ENCODE measurements at regions of chr22 and their contacts with region 1.

Region 1: DNA sequence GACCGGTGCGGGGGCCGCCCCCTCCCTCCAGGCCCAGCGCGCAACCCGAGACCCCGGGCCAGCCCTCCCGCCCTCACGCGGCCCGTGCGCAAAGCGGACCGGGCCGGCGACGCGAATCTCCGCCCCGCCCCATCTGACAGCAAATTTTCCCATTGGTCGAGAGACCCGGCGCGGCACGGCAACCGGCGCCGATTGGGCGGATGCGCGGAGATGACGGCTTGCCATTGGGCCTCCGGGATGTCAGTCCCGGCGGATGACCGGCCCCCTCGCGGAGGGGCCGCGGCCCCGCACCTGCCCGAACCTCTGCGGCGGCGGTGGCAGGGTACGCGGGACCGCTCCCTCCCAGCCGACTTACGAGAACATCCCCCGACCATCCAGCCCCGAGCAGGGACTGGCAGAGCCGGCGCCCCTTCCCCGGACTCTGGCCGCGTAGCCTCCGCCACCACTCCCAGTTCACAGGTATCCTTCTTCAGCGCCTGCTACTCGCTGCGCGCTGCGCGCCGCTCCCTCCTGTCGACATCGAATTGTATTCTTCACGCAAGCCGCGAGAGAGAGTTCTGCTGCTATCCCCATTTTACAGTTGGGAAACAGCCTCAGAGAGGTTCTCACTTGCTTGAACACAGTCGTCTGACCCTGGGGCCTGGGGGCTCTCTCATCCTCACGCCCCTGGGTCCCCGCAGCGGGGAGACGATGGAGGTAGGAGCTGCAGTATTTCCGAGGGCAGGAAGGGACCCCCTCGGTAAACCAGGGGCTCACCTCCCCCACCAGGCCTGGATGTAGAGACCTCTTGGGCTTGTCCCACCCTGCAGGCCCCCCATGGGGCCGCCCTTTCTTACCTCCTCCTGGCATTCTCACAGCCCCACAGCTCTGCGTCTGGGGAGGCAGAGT is at the start of gene ARVCF:
- DNase-seq: peak; percentile 89 to 94 (median 90)
- H3K4me3 ChIP-seq: peak within 1 kb of the TSS; percentile 77 to 83
- H3K4me3 Mint-ChIP-seq: peak within 1 kb of the TSS; percentile 86 to 92 (median 90)
- H3K27ac ChIP-seq: peak within 1 kb of the TSS; percentile 17
- H3K27ac Mint-ChIP-seq: peak within 1 kb of the TSS in 6 of 7 donors; percentile 8 to 67 (median 59)
- H3K4me1 ChIP-seq: peaks cover 35% of the 10 kb centered on the region
- H3K4me1 Mint-ChIP-seq: peaks cover 7 to 36% (median 20%) of the 10 kb centered on the region in 4 donors
- H3K27me3 ChIP-seq: no peaks in the 10 kb centered on the region
- H3K27me3 Mint-ChIP-seq: peaks cover 0 to 2% of the 10 kb centered on the region in 2 donors
- total RNA-seq, gene ARVCF: 3.5 to 4.2 TPM

Region 2: DNA sequence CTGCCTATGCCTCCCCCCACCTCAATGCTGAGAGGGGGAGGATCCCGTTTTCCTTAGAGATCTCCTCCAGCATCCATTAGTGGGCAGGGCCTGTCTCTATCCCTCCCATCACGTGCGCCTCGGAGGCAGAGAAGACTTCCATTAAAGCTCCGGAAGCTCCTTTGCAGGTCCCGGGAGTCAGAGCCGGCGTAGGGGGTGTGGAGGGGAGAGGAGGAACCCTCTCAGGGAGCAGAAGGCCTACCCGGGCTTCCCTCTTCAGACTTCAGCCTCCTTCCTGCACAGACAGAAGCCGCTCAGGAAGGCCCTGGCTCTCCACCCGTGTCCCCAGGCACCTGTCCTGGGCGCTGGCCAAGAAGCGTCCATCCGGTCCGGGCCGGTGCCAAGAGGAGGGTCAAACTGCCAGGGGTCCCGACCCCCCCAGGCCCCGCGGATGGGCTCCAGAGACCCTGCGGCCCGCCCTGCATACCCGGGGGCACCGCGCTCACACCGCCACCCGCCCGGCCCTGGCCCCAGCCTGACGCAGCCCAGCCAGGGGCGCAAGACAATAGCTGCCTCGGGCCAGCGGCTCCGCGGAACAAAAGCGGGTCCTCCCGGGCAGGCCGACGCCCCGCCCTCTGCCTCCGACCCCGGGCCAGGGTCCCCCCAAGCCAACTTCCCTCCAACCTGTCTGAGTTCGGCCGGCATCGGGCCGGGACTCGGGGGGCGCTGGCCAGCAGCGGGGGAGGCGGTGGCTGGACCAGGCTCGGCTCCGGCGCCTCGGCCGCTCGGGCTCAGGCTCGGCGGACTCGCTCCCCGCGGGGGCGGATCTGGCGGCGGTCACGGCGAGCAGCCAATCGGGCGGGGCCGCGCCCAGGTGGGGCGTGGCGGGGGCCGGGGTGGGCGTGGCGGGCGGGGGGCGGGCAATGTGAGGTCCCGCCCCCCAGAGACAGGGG is 30.3 kb before region 1 on chr22:
- CTCF ChIA-PET with region 1: no interaction called
- POLR2A ChIA-PET with region 1: no interaction called
- intact Hi-C with region 1: loop called (anchors 2 kb)
- DNase-seq: peak in 4 of 5 donors; percentile 41 to 61 (median 50)
- H3K4me3 ChIP-seq: peak overlapping the region in 1 of 2 donors; percentile 44
- H3K4me3 Mint-ChIP-seq: peak overlapping the region in 7 of 8 donors; percentile 31 to 64 (median 42)
- H3K27ac ChIP-seq: no peak overlapping the region
- H3K27ac Mint-ChIP-seq: no peak overlapping the region
- H3K4me1 ChIP-seq: peaks cover 24% of the 10 kb centered on the region
- H3K4me1 Mint-ChIP-seq: peaks cover 0 to 4% (median 0%) of the 10 kb centered on the region in 4 donors
- H3K27me3 ChIP-seq: no peaks in the 10 kb centered on the region
- H3K27me3 Mint-ChIP-seq: peaks cover 0 to 2% of the 10 kb centered on the region in 2 donors

Region 3: DNA sequence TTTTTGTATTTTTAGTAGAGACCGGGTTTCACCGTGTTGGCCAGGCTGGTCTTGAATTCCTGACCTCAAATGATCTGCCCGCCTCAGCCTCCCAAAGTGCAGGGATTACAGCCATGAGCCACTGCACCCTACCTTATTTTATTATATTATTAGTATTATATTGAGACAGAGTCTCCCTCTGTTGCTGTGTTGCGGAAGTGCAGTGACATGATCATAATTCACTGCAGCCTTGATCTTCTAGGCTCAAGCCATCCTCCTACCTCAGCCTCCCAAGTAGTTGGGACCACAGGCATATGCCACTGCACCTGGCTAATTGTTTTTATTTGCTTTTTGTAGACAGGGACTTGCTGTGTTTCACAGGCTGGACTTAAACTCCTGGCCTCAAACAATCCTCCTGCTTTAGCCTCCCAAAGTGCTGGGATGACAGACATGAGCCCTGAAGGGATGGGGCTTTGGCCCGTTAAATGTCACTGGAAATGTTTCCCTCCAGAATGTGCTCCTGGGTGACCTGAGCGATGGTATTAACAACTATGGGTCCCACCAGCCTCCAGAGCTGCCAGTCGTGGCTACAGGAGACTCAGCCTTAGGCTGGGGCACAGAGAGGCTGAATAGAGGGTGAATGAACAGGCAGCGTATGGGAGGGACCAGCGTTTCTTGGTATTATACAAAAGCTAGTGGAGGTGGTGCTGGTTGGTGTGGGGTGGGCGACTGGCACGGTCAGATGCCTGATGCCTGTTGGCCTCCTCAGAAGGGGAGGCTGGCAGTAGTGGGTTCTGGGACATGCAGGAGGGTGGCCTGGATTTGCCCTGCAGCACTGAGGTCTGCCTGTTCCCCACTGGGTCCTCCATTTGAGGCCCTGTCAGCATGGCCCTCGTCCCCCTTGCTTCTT is 11.2 kb after region 1 on chr22:
- CTCF ChIA-PET with region 1: no interaction called
- POLR2A ChIA-PET with region 1: interaction called, 11 read pairs
- intact Hi-C with region 1: no loop called
- DNase-seq: no peak
- H3K4me3 ChIP-seq: no peak overlapping the region
- H3K4me3 Mint-ChIP-seq: no peak overlapping the region
- H3K27ac ChIP-seq: no peak overlapping the region
- H3K27ac Mint-ChIP-seq: no peak overlapping the region
- H3K4me1 ChIP-seq: peaks cover 52% of the 10 kb centered on the region
- H3K4me1 Mint-ChIP-seq: peaks cover 21 to 53% (median 36%) of the 10 kb centered on the region in 4 donors
- H3K27me3 ChIP-seq: no peaks in the 10 kb centered on the region
- H3K27me3 Mint-ChIP-seq: no peaks in the 10 kb centered on the region

Region 4: DNA sequence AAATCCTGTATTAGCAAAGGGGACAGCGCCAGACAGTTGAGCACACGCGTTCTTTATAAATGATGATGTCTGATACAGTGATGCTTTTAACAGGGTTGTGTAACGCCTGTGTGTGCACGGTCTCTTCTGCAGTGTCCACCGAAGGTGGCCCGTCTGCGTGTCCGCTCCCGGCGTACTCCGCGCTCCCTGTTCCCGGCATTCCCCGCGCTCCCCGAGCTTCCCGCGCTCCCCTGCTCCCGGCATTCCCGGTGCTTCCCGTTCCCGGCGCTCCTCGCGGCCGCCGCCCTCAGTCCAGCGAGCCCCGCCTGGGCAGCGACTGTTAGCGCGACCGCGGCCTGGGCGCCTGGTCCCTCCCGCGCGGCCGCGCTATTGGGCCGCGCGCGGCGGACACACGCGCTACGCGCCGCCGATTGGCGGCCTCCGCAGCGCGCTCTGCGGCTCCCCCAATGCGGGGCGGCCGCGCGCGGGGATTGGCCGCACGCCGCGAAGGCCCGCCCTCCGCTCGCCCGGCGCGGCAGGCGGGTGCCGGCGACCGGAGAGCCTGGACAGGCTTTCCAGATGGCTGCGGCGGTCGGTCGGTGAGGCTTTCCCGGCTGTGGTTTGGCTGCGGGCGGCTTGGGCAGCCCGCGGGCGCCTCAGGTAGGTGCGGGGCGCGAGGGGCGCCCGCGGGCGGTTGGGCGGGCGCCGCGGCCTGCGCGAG is 62.9 kb after region 1 on chr22 and contains the start of gene DGCR8:
- CTCF ChIA-PET with region 1: no interaction called
- POLR2A ChIA-PET with region 1: no interaction called
- intact Hi-C with region 1: loop called (anchors 2 kb)
- DNase-seq: peak; percentile 52 to 83 (median 79)
- H3K4me3 ChIP-seq: peak within 1 kb of the TSS; percentile 80 to 86
- H3K4me3 Mint-ChIP-seq: peak within 1 kb of the TSS; percentile 87 to 99 (median 94)
- H3K27ac ChIP-seq: peak within 1 kb of the TSS; percentile 80
- H3K27ac Mint-ChIP-seq: peak within 1 kb of the TSS; percentile 85 to 97 (median 91)
- H3K4me1 ChIP-seq: peaks cover 52% of the 10 kb centered on the region
- H3K4me1 Mint-ChIP-seq: peaks cover 27 to 47% (median 39%) of the 10 kb centered on the region in 4 donors
- H3K27me3 ChIP-seq: no peaks in the 10 kb centered on the region
- H3K27me3 Mint-ChIP-seq: no peaks in the 10 kb centered on the region
- total RNA-seq, gene DGCR8: 47.6 to 48.2 TPM

Region 5: GRCh38 chr22:20116951-20117645 is 100.1 kb after region 1 on chr22 and contains the start of gene TRMT2A:
- CTCF ChIA-PET with region 1: no interaction called
- POLR2A ChIA-PET with region 1: interaction called, 30 read pairs
- intact Hi-C with region 1: loop called (anchors 1 kb)
- DNase-seq: peak; percentile 96 to 98 (median 97)
- H3K4me3 ChIP-seq: peak within 1 kb of the TSS; percentile 81 to 82
- H3K4me3 Mint-ChIP-seq: peak within 1 kb of the TSS; percentile 85 to 93 (median 92)
- H3K27ac ChIP-seq: peak within 1 kb of the TSS; percentile 85
- H3K27ac Mint-ChIP-seq: peak within 1 kb of the TSS; percentile 93 to 96 (median 95)
- H3K4me1 ChIP-seq: peaks cover 49% of the 10 kb centered on the region
- H3K4me1 Mint-ChIP-seq: peaks cover 14 to 53% (median 31%) of the 10 kb centered on the region in 4 donors
- H3K27me3 ChIP-seq: no peaks in the 10 kb centered on the region
- H3K27me3 Mint-ChIP-seq: no peaks in the 10 kb centered on the region
- total RNA-seq, gene TRMT2A: 110 to 126 TPM

Region 6: DNA sequence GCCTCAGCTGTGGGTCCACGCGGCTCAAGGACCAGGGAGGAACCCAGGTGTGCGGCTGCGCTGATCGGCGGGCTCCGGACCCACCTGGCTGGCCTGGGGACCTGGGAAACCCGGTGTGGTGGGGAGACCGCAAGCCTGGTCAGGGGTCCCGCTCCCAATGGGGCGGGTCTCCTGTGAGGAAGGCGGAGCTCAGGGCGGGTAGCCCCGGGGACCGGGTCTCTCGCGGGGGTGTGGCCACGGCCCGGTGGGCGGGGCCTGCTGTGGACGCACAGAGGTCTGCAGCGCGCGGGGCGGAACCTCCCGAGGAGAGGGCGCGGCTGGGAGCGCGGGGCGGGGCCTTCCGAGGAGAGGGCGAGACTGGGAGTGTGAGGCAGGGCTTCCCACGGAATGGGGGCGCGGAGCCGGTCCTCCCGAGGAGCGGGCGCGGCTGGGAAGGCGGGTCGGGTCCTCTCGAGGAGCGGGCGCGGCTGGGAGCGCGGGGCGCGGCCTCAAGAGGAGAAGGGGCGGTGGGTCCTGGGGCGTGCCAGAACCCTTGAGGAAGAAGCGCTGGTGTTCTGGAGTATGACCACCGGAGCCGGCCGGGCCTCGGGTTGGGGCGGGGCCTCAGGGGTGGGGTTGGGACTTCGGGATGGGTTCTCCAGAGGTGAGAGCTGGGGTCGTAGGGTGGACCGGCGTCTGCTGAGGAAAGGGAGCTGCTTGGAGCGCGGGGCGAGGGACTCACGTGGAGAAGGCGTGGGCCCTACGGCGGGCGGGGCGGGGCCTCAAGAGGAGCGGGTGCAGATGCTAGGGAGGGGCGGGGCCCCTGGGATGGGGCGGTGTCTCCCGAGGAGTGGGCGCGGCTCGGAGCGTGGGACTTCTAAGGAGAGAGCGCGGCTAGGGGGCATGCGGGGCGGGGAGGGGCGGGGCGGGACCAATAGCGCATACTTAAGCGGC is 282.1 kb after region 1 on chr22:
- CTCF ChIA-PET with region 1: no interaction called
- POLR2A ChIA-PET with region 1: no interaction called
- intact Hi-C with region 1: no loop called
- DNase-seq: peak; percentile 88 to 93 (median 91)
- H3K4me3 ChIP-seq: peak overlapping the region in 1 of 2 donors; percentile 62
- H3K4me3 Mint-ChIP-seq: peak overlapping the region; percentile 81 to 89 (median 84)
- H3K27ac ChIP-seq: peak overlapping the region; percentile 25
- H3K27ac Mint-ChIP-seq: peak overlapping the region in 6 of 7 donors; percentile 65 to 95 (median 82)
- H3K4me1 ChIP-seq: peaks cover 6% of the 10 kb centered on the region
- H3K4me1 Mint-ChIP-seq: peaks cover 2 to 10% (median 8%) of the 10 kb centered on the region in 4 donors
- H3K27me3 ChIP-seq: no peaks in the 10 kb centered on the region
- H3K27me3 Mint-ChIP-seq: peaks cover 0 to 3% of the 10 kb centered on the region in 2 donors

Measured in CD4-positive, alpha-beta memory T cell (primary cell).